Dendritic cell treated with granulocyte-macrophage colony-stimulating factor and Interleukin-4, amounts not matched to agents 40 ng/mL and 50 ng/mL, for 4 days (primary cell): ENCODE measurements at regions of chr20 and their contacts with region 1.

Region 1: DNA sequence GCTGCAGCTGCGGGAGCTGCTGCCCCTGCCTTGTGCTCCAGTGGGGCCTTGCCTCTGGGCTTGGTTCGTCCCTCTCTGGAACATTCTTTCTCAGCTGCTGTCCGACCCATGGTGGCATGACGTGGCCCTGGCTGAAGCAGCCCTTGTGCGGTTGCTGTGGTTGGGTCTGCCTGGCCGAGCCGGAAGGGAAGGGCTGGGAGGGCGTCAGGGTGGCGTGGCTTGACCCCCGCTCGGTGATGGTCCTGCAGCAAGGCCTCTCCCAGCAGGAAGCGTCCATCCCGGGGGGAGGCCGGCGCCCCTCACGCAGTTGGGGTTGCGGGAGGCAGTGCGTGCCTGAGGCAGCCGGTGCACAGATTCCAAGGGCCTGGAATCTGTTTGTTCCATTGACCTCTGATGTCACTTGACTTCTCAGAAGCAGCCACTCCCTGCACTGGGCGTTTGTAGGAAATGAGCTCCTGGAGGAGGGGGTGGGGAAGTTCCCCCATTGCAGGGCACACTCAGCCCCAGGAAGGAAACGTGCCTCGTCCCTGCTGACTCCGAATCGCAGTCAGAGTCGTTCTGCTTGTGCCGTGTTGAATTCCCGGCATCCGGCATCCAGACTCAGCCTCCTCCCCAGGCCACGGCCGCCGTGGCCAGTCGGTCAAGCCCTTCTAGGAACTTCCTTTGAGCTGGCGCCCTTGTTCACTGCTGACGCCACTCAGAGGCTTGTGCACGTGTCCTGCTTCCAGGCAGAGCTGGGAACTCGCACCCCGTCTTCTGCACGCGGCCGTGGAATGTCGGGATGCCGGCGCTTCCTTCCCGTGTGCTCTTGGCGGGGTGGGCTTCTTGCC is 9.7 kb upstream of the TNFRSF6B start:
- H3K4me3 Mint-ChIP-seq: peak overlapping the region; percentile 58
- H3K27ac Mint-ChIP-seq: peak overlapping the region; percentile 100
- H3K4me1 Mint-ChIP-seq: peaks cover 83% of the 10 kb centered on the region
- H3K27me3 Mint-ChIP-seq: no peaks in the 10 kb centered on the region

Region 2: DNA sequence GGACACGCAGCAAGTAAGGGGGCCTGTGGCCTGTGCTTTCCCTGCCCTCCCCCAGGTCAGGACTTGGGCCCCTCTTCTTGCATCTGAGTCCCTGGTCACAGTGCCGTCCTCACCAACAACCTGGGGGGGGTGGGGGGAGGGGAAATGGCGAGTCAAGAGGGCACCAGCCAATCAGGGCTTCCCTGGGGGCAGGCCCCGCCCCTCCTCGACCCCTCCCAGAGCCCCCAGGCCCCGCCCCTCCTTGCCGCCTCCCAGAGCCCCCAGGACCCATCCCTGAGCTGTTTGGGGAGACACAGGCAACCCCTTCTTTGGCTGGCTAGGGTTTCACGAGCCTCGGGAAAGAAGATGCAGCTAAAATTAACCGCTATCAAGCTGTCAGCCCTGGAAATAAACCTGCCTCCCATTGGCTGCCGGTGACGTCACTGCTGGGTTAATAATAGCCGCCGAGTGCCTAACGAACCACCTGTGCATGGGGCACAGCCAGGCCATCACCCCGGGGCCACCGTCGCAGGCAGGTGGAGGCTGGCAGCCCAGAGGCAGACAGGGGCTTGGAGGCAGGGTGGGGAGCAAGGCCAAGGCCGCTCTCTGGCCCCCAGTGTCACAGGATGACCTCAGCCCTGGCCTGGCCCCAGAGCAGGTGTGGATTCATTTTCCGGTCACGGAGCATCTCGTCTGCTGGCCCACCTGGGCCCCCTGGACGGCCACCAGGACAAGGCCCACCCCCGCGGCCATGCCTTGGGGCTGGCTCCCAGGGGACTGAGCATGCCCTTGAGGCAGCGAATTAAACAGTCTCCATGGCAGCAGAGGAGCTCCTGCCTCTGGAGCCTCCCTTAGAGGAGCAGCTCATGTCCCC is 184.7 kb before region 1 on chr20:
- intact Hi-C with region 1: no loop called
- H3K4me3 Mint-ChIP-seq: no peak overlapping the region
- H3K27ac Mint-ChIP-seq: no peak overlapping the region
- H3K4me1 Mint-ChIP-seq: peaks cover 1% of the 10 kb centered on the region
- H3K27me3 Mint-ChIP-seq: peaks cover 73% of the 10 kb centered on the region

Region 3: GRCh38 chr20:63657937-63658748 is 28.6 kb before region 1 on chr20 and contains the start of gene RTEL1:
- intact Hi-C with region 1: loop called (anchors 2 kb)
- H3K4me3 Mint-ChIP-seq: peak within 1 kb of the TSS; percentile 96
- H3K27ac Mint-ChIP-seq: peak within 1 kb of the TSS; percentile 99
- H3K4me1 Mint-ChIP-seq: peaks cover 52% of the 10 kb centered on the region
- H3K27me3 Mint-ChIP-seq: peaks cover 19% of the 10 kb centered on the region

Region 4: GRCh38 chr20:63835021-63835858 is 148.5 kb after region 1 on chr20:
- intact Hi-C with region 1: no loop called
- H3K4me3 Mint-ChIP-seq: no peak overlapping the region
- H3K27ac Mint-ChIP-seq: peak overlapping the region; percentile 61
- H3K4me1 Mint-ChIP-seq: peaks cover 54% of the 10 kb centered on the region
- H3K27me3 Mint-ChIP-seq: peaks cover 43% of the 10 kb centered on the region